ENCODE measurements at regions of chr12 and their contacts with region 1.

Region 1: GRCh38 chr12:53159195-53159839 is 21.2 kb upstream of the ZNF740 start:
- DNase-seq: peak; percentile 82
- H3K4me3 ChIP-seq: no peak overlapping the region
- H3K27ac ChIP-seq: peak overlapping the region in 1 of 2 donors; percentile 11
- H3K4me1 ChIP-seq: no peaks in the 10 kb centered on the region
- H3K27me3 ChIP-seq: no peaks in the 10 kb centered on the region
- CTCF ChIP-seq: peak; percentile 96 to 98 (median 97)
- POLR2A ChIP-seq: no peak

Region 2: DNA sequence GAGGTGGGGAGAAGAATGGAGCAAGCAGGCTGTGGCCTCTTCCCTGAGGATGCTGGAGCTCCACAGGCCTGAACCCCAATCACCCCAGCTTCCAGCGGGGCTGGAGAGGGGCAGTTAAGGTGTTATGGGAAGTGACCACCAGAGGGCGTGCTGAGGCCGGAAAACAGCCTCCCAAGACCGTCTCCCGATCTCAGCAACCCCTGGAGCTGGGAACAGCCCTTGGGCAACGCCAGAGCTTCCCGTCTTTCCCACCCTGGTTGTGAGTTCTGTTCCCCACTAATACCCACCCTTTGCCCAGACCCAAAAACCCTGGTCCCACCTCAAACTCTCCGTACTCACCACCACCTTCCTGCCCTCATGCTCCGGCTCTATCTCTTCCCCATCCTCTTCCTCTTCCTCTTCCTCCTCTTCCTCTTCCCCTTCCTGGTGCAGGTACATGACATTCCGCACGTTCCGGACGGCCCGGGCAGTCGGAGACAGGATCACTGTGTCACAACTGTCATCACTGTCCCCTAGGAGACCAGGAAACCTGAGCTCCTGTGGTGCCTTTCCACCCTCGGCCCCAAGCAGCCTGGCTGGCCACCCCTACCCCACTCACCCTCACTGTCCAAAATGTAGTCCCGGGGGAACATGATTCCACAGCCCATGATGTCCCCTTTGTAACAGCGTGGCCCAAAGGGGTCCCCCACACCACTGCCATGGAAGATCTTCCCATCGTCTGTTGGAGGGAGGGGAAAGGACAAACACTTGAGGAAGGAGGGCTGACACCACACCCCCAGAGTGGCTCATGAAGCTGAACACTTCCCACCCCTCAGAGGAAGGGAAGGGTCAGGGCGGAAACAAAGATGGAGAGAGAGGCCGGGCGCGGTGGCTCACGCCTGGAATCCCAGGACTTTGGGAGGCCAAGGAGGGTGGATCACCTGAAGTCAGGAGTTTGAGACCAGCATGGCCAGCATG is 93.1 kb before region 1 on chr12:
- intact Hi-C with region 1: loop called (anchors 5 kb)
- DNase-seq: no peak
- H3K4me3 ChIP-seq: no peak overlapping the region
- H3K27ac ChIP-seq: peak overlapping the region; percentile 58 to 70
- H3K4me1 ChIP-seq: peaks cover 8% of the 10 kb centered on the region
- H3K27me3 ChIP-seq: no peaks in the 10 kb centered on the region
- CTCF ChIP-seq: peak; percentile 80 to 95 (median 93)
- POLR2A ChIP-seq: no peak

Region 3: DNA sequence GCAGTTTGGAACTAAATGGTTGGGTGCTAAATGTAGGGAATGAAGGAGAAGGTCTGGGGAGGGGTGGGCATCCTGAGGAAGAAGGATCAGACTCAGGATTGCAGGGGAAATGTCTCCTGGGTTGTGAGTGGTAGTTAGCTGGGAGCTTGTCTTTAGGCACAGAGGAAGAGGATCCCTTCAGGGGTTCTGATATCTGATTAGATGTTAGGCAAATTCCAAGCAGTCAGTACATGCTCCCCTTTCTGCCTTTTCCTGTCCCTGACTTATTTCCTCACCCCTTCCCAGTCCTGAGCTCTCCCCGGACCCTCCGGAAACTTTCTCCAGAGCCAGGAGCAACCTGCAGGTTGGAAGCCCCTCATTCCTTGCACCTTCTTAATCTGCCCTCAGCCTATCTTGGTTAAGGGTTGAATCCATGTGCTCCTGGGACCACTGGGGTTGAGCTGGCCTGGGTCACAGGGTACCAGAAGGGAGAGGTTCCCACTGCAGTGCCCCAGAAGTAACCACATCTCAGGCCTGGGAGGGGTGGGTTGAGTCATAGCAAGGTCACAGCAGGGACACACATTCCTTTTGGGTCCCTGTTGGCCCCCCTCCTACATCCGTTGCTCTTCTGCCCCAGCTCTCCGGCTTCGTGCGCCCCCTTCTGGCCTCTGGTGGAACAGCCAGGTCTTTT is 60.2 kb before region 1 on chr12:
- intact Hi-C with region 1: loop called (anchors 5 kb)
- DNase-seq: peak; percentile 86
- H3K4me3 ChIP-seq: peak overlapping the region; percentile 12 to 48
- H3K27ac ChIP-seq: peak overlapping the region; percentile 71 to 86
- H3K4me1 ChIP-seq: peaks cover 5% of the 10 kb centered on the region
- H3K27me3 ChIP-seq: no peaks in the 10 kb centered on the region
- CTCF ChIP-seq: peak; percentile 91 to 97 (median 95)
- POLR2A ChIP-seq: peak; percentile 14

Region 4: GRCh38 chr12:53190108-53190729 is 30.9 kb after region 1 on chr12:
- intact Hi-C with region 1: loop called (anchors 1 kb)
- DNase-seq: peak; percentile 43
- H3K4me3 ChIP-seq: no peak overlapping the region
- H3K27ac ChIP-seq: no peak overlapping the region
- H3K4me1 ChIP-seq: no peaks in the 10 kb centered on the region
- H3K27me3 ChIP-seq: no peaks in the 10 kb centered on the region
- CTCF ChIP-seq: peak; percentile 42 to 80 (median 58)
- POLR2A ChIP-seq: no peak

Region 5: DNA sequence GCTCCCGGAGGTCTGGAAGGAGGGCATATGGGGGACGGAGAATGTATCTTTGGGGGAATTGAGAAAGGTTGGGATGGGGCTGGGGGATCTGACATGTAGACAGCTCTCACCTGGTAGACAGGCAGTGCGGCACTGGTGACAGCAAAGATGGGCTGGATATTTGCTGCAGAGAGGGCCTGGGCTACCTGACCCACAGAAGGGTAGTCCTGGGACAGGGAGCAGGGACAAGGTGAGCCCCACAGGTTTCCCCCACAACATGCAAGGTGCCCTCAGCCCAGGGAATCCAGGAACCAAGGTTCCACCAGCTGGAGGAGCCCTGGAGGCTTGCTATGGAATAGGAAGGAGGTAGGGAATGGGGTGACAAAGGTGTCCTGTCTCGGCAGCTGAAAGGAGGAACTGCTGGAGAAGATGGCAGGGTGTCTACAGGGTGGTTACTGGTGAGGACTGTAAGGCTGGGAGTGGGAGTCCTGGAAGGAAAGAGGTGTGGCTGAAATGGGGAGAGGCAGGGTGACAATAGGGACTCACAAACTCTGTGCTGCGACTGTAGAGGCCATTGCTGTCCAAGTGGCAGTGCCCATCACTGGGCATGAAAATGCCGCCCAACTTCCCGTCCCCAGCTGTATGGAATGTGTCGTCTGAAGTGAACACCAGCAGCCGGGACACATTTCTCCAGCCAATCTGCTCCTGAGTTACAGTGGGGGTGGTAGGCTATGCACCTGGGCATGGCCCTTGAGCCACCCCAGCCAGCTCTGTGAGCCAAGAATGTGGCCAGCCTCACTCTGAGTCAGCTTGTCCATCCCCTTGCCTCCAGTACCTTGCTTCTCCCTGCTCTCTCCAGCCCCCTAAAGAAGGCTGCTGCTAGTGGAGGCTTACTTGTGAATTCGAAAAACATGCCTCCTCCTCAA is 36.5 kb after region 1 on chr12:
- intact Hi-C with region 1: loop called (anchors 1 kb)
- DNase-seq: no peak
- H3K4me3 ChIP-seq: no peak overlapping the region
- H3K27ac ChIP-seq: no peak overlapping the region
- H3K4me1 ChIP-seq: no peaks in the 10 kb centered on the region
- H3K27me3 ChIP-seq: no peaks in the 10 kb centered on the region
- CTCF ChIP-seq: no peak
- POLR2A ChIP-seq: no peak